Cardiac septum (tissue), 1 donor: ENCODE measurements at regions of chr2 and their contacts with region 1.

Region 1: DNA sequence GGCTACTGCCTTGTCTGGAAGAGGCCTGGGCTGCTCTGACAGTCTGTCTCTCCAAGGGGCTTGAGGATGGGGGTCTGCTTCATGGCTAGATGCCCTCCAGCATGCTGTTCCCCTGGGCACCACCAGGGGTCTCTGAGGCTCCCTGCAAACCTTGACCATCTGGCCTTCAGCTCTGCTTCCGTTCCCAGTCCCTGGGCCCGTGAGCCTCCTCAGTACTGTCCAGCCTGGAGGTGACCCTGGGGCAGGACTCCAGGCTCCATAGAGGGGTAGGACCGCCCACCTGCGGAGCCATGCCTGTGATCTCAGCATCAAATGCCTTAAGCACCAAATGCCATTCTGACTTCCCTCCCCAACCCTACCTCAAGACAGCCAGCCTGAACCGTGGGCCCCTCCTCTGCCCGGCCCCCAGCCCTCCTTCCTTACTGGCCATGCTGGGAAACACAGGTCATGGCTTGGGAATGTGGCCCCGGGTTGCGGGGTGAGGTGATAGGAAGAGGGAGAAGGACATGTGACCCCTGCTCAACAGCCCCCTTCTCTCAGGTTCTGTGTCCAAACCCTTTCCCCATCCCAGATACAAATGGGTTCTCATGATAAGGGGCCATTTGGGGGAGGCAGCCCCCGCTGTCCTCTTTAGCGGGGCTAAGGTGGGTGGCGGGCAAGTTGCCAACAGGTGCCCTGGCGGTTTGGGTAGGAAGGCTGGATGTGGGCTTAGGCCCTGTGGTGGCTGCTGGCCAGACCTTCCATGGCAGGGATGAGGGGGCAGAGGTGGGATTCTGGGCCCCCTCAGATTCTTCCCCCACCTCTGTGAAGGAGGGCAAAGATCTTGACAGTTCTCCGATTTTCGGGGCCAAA is 25.0 kb downstream of the SPEG start:
- DNase-seq: no peak

Region 2: GRCh38 chr2:219418570-219419189 is 41.0 kb before region 1 on chr2:
- intact Hi-C with region 1: no loop called
- DNase-seq: no peak

Region 3: GRCh38 chr2:219430633-219431615 is 28.8 kb before region 1 on chr2:
- intact Hi-C with region 1: loop called (anchors 2 kb)
- DNase-seq: no peak

Region 4: DNA sequence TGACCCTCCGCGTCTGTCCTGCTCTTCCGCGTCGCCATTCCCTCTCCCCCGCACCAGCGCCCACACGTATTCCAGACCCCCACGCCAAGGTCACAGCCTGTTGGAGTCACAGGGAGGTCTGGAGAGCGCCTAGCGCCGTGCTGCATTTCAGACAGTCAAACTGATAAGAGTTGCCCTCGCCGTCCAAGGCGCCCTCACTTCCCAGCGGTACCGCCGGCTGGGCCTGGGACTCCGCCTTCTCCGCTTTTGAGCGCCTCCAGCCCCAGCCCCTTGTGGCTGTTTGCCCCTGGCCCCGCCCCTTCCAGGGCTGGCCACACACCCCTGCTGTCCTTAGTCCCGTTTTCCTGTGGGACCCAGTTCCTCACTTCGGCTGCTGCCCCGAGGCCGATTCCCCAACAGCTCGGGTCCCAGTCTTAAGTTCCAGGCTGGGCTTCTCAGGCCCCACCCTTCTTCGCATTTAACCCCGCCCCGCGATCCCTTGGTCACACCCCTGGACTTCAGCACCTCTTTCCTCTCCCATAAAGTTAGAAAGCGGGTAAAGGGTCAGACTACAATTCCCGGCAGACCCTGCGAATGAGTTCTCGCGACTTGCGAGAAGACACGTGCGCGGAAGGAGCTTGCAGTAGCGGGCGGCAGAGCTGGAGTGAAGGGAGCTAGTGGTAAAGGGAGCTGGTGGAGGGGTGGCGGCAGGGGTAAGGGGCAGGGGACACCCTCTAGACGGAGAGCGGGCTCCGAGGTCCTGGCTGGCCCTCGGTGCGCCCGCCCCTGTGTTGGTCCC is 38.8 kb after region 1 on chr2 and contains the start of gene GMPPA:
- intact Hi-C with region 1: loop called (anchors 2 kb)
- DNase-seq: peak; percentile 99
- total RNA-seq, gene GMPPA: 22.6 TPM

Region 5: GRCh38 chr2:219521066-219521880 is 61.6 kb after region 1 on chr2:
- intact Hi-C with region 1: loop called (anchors 2 kb)
- DNase-seq: no peak

Region 6: GRCh38 chr2:219987830-219988229 is 528.1 kb after region 1 on chr2:
- intact Hi-C with region 1: no loop called
- DNase-seq: no peak